Common myeloid progenitor, CD34-positive (primary cell): ENCODE measurements at regions of chr15 and their contacts with region 1.

Region 1: GRCh38 chr15:59528965-59529402 is 82.6 kb upstream of the GCNT3 start:
- DNase-seq: peak; percentile 66 to 72 (median 66)
- H3K4me3 ChIP-seq: no peak overlapping the region
- H3K27ac ChIP-seq: no peak overlapping the region
- H3K4me1 ChIP-seq: peaks cover 8 to 16% (median 13%) of the 10 kb centered on the region in 4 experiments
- H3K27me3 ChIP-seq: peaks cover 0 to 2% (median 0%) of the 10 kb centered on the region in 5 experiments

Region 2: DNA sequence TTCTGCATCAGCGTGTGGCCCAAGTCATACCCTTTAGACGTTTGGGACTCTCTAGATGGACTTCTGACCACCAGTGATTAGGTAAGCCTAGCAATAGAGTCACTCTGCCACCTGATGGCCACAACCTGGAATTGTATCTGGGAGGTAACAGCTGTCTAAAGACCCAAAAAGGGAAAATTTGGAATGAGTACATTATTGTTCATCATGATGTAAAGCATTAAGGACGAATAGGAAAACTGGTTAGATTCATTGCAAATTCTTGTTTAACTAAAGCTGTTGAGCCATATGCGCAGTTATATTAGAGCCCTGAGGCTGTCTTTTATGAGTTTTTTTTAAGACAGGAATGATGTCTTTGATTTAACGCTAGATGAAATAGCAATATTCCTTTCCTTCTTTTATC is 27.4 kb before region 1 on chr15:
- CTCF ChIA-PET with region 1: interaction called, 14 read pairs
- POLR2A ChIA-PET with region 1: no interaction called
- DNase-seq: peak in 2 of 3 donors; percentile 21 to 22
- H3K4me3 ChIP-seq: no peak overlapping the region
- H3K27ac ChIP-seq: no peak overlapping the region
- H3K4me1 ChIP-seq: no peaks in the 10 kb centered on the region
- H3K27me3 ChIP-seq: peaks cover 0 to 2% (median 0%) of the 10 kb centered on the region in 5 experiments

Region 3: DNA sequence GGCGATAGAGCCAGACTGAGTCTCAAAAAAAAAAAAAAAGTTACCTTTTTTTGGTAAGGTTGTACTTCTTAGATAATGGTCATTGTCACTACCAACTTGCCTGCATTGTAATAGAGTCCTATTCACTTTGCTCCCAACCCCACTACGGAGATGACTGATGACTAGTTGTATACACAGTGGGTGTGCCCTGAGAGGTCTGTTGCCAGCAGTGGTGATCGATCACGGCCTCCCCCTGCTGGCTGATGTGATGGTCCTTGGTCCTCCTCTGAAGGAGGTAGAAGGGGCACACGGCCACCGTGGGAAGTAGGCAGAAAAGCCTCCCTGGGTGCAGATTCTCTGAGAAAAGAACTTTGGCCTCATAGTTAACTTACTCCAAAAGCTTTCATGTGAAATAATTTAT is 93.3 kb after region 1 on chr15:
- CTCF ChIA-PET with region 1: interaction called, 11 read pairs
- POLR2A ChIA-PET with region 1: no interaction called
- DNase-seq: peak; percentile 62 to 64 (median 62)
- H3K4me3 ChIP-seq: no peak overlapping the region
- H3K27ac ChIP-seq: no peak overlapping the region
- H3K4me1 ChIP-seq: no peaks in the 10 kb centered on the region
- H3K27me3 ChIP-seq: peaks cover 0 to 23% (median 13%) of the 10 kb centered on the region in 5 experiments

Region 4: GRCh38 chr15:59642351-59642750 is 113.4 kb after region 1 on chr15:
- CTCF ChIA-PET with region 1: interaction called, 22 read pairs
- POLR2A ChIA-PET with region 1: no interaction called
- DNase-seq: peak in 2 of 3 donors; percentile 13 to 23
- H3K4me3 ChIP-seq: no peak overlapping the region
- H3K27ac ChIP-seq: no peak overlapping the region
- H3K4me1 ChIP-seq: no peaks in the 10 kb centered on the region
- H3K27me3 ChIP-seq: no peaks in the 10 kb centered on the region

Region 5: DNA sequence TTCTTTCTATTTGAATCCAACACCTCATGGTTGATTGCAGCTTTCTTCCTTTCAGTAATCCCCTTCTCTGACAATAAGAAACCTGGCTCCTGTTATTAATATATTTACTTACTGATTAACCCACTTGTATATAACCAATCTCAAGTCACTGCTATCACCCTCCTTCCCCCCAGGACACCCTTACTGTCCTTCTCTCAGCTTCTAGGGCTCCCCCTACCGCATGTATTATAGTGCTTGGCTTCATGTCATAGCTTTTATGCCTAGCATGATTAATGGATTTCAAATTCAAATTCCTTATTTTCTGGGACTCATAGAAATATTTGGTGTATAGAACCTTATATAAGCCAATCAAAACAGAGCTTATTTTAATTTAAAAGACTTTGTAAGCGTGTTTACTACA is 235.8 kb after region 1 on chr15:
- CTCF ChIA-PET with region 1: no interaction called
- POLR2A ChIA-PET with region 1: no interaction called
- DNase-seq: no peak
- H3K4me3 ChIP-seq: no peak overlapping the region
- H3K27ac ChIP-seq: no peak overlapping the region
- H3K4me1 ChIP-seq: no peaks in the 10 kb centered on the region
- H3K27me3 ChIP-seq: peaks cover 0 to 2% (median 0%) of the 10 kb centered on the region in 5 experiments